MCF 10A (cell line): ENCODE measurements at regions of chr3 and their contacts with region 1.

Region 1: GRCh38 chr3:161274719-161275298 is 53.7 kb downstream of the NMD3 start:
- DNase-seq: peak; percentile 72
- H3K4me3 Mint-ChIP-seq: no peak overlapping the region
- H3K27ac Mint-ChIP-seq: no peak overlapping the region
- H3K4me1 Mint-ChIP-seq: peaks cover 4% of the 10 kb centered on the region
- H3K27me3 Mint-ChIP-seq: no peaks in the 10 kb centered on the region
- CTCF ChIP-seq: peak; percentile 52

Region 2: GRCh38 chr3:161096771-161097355 is 177.9 kb before region 1 on chr3:
- CTCF ChIA-PET with region 1: interaction called, 4 read pairs
- POLR2A ChIA-PET with region 1: interaction called, 3 read pairs
- intact Hi-C with region 1: loop called (anchors 1 kb)
- DNase-seq: peak; percentile 42
- H3K4me3 Mint-ChIP-seq: no peak overlapping the region
- H3K27ac Mint-ChIP-seq: no peak overlapping the region
- H3K4me1 Mint-ChIP-seq: no peaks in the 10 kb centered on the region
- H3K27me3 Mint-ChIP-seq: no peaks in the 10 kb centered on the region
- CTCF ChIP-seq: peak; percentile 41

Region 3: GRCh38 chr3:161291195-161291912 is 16.5 kb after region 1 on chr3:
- CTCF ChIA-PET with region 1: interaction called, 32 read pairs
- POLR2A ChIA-PET with region 1: interaction called, 9 read pairs
- intact Hi-C with region 1: no loop called
- DNase-seq: peak; percentile 97
- H3K4me3 Mint-ChIP-seq: peak overlapping the region; percentile 29
- H3K27ac Mint-ChIP-seq: peak overlapping the region; percentile 44
- H3K4me1 Mint-ChIP-seq: peaks cover 14% of the 10 kb centered on the region
- H3K27me3 Mint-ChIP-seq: no peaks in the 10 kb centered on the region
- CTCF ChIP-seq: no peak

Region 4: DNA sequence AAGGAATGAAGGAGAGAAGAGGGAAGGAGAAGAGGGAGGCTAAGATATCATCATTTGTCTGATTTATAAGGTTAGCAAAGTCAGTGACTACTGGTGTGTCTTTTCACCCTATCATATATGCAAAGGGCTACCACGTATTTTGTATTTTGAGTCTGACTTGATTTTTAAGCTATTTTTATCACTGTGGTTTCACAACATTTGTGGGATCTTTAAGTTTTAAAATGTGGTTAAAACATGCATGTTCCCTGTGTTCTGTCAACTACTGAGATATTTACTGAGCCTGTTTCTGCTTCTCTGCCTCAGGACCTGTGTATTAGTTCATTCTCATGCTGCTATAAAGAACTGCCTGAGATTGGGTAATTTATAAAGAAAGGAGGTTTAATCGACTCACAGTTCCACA is 119.0 kb after region 1 on chr3:
- CTCF ChIA-PET with region 1: interaction called, 10 read pairs
- POLR2A ChIA-PET with region 1: no interaction called
- intact Hi-C with region 1: no loop called
- DNase-seq: no peak
- H3K4me3 Mint-ChIP-seq: no peak overlapping the region
- H3K27ac Mint-ChIP-seq: no peak overlapping the region
- H3K4me1 Mint-ChIP-seq: no peaks in the 10 kb centered on the region
- H3K27me3 Mint-ChIP-seq: no peaks in the 10 kb centered on the region
- CTCF ChIP-seq: no peak

Region 5: GRCh38 chr3:161415497-161416251 is 140.9 kb after region 1 on chr3:
- CTCF ChIA-PET with region 1: interaction called, 110 read pairs
- POLR2A ChIA-PET with region 1: interaction called, 4 read pairs
- intact Hi-C with region 1: no loop called
- DNase-seq: peak; percentile 83
- H3K4me3 Mint-ChIP-seq: peak overlapping the region; percentile 3
- H3K27ac Mint-ChIP-seq: peak overlapping the region; percentile 88
- H3K4me1 Mint-ChIP-seq: peaks cover 29% of the 10 kb centered on the region
- H3K27me3 Mint-ChIP-seq: no peaks in the 10 kb centered on the region
- CTCF ChIP-seq: no peak